ENCODE measurements at regions of chr12 and their contacts with region 1.

Region 1: GRCh38 chr12:575948-576612 is 87.2 kb downstream of the NINJ2 start:
- DNase-seq: peak; percentile 83
- ATAC-seq: peak; percentile 88
- H3K4me3 Mint-ChIP-seq: no peak overlapping the region
- H3K27ac Mint-ChIP-seq: no peak overlapping the region
- H3K4me1 Mint-ChIP-seq: peaks cover 27% of the 10 kb centered on the region
- H3K27me3 Mint-ChIP-seq: peaks cover 12% of the 10 kb centered on the region
- CTCF ChIP-seq: peak; percentile 99

Region 2: GRCh38 chr12:614411-614970 is 38.4 kb after region 1 on chr12:
- CTCF ChIA-PET with region 1: interaction called, 10 read pairs
- POLR2A ChIA-PET with region 1: no interaction called
- DNase-seq: peak; percentile 41
- ATAC-seq: peak; percentile 78
- H3K4me3 Mint-ChIP-seq: no peak overlapping the region
- H3K27ac Mint-ChIP-seq: no peak overlapping the region; the same call in 1 of the 2 replicates
- H3K4me1 Mint-ChIP-seq: peaks cover 9% of the 10 kb centered on the region; the same call in 1 of the 2 replicates
- H3K27me3 Mint-ChIP-seq: no peaks in the 10 kb centered on the region; the same call in 1 of the 2 replicates
- CTCF ChIP-seq: no peak

Region 3: DNA sequence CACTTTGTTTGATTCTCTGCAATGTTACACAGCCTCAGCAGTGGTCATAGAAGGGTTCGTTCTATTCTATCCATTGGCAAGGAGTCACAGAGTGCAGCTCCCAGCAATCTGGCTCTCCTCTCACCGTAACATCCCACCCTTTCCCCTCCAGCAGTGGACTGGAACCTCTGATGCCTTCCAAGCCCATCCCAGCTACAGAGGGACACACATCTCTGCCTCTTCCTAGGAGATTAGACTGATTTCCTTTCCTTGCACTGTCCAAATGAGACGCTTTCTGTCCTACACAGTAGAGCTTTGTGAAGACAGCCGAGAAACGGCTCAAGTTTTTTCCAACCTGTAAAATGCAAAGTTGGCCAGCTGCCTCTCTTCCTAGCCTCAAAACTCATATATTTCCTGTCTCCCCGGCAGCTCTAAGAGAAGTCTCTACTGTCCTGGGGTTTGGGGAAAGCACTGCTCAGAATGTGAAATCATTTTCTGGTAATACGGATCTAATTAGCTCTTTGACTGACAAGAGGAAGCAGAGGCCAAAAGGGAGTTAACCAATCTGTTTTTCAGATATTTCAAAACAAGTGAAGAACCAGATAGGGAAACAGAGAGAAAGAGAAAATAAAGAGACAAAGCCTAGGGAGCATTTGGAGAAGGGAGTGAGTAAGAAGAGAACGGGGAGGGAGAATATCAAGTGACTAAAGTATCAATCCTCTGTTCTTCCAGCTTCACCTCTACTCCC is 86.6 kb after region 1 on chr12:
- CTCF ChIA-PET with region 1: interaction called, 14 read pairs
- POLR2A ChIA-PET with region 1: no interaction called
- DNase-seq: no peak
- ATAC-seq: no peak
- H3K4me3 Mint-ChIP-seq: no peak overlapping the region
- H3K27ac Mint-ChIP-seq: no peak overlapping the region
- H3K4me1 Mint-ChIP-seq: peaks cover 19% of the 10 kb centered on the region
- H3K27me3 Mint-ChIP-seq: no peaks in the 10 kb centered on the region
- CTCF ChIP-seq: no peak

Region 4: GRCh38 chr12:810671-811415 is 234.8 kb after region 1 on chr12:
- CTCF ChIA-PET with region 1: interaction called, 29 read pairs
- POLR2A ChIA-PET with region 1: no interaction called
- DNase-seq: no peak
- ATAC-seq: no peak
- H3K4me3 Mint-ChIP-seq: no peak overlapping the region
- H3K27ac Mint-ChIP-seq: 0 out of 2 replicates have a peak overlapping the region, but pooled peaks have one; percentile 13
- H3K4me1 Mint-ChIP-seq: peaks cover 35% of the 10 kb centered on the region
- H3K27me3 Mint-ChIP-seq: no peaks in the 10 kb centered on the region
- CTCF ChIP-seq: no peak

Measured in WTC11 (cell line).